CD8-positive, alpha-beta T cell (primary cell): ENCODE measurements at regions of chr15 and their contacts with region 1.

Region 1: GRCh38 chr15:74635228-74635627 is 19.6 kb downstream of the CLK3 start:
- DNase-seq: peak; percentile 53 to 84 (median 73)
- ATAC-seq: peak; percentile 95
- H3K4me3 ChIP-seq: no peak overlapping the region
- H3K4me3 Mint-ChIP-seq: no peak overlapping the region
- H3K27ac ChIP-seq: peak overlapping the region in 1 of 2 experiments; percentile 36
- H3K27ac Mint-ChIP-seq: no peak overlapping the region
- H3K4me1 ChIP-seq: peaks cover 6% of the 10 kb centered on the region
- H3K4me1 Mint-ChIP-seq: peaks cover 5% of the 10 kb centered on the region
- H3K27me3 ChIP-seq: no peaks in the 10 kb centered on the region
- H3K27me3 Mint-ChIP-seq: no peaks in the 10 kb centered on the region
- CTCF ChIP-seq: peak; percentile 82

Region 2: DNA sequence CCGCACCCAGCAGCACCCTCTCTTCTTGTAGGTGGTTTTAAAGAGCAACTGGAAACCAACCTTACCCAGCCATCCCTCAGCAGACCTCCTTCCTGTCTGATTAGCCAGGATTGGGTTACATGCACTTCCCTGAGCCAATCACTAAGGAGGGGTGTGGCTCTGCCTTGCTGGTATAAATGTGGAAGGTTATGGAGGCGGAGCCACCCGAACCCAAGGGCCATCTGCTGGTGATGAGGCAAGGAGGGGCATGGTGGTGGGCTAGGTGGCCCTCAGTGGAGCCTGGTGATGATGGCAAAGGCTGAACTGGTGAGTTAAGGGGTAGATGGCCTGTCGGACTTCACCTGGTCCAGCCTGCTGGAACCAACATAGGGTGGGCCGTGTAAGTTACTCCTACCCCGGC is 359.3 kb before region 1 on chr15:
- CTCF ChIA-PET with region 1: no interaction called
- POLR2A ChIA-PET with region 1: no interaction called
- intact Hi-C with region 1: no loop called
- DNase-seq: no peak
- ATAC-seq: no peak
- H3K4me3 ChIP-seq: no peak overlapping the region
- H3K4me3 Mint-ChIP-seq: no peak overlapping the region
- H3K27ac ChIP-seq: no peak overlapping the region
- H3K27ac Mint-ChIP-seq: no peak overlapping the region
- H3K4me1 ChIP-seq: no peaks in the 10 kb centered on the region
- H3K4me1 Mint-ChIP-seq: no peaks in the 10 kb centered on the region
- H3K27me3 ChIP-seq: no peaks in the 10 kb centered on the region
- H3K27me3 Mint-ChIP-seq: peaks cover 22% of the 10 kb centered on the region
- CTCF ChIP-seq: no peak

Region 3: DNA sequence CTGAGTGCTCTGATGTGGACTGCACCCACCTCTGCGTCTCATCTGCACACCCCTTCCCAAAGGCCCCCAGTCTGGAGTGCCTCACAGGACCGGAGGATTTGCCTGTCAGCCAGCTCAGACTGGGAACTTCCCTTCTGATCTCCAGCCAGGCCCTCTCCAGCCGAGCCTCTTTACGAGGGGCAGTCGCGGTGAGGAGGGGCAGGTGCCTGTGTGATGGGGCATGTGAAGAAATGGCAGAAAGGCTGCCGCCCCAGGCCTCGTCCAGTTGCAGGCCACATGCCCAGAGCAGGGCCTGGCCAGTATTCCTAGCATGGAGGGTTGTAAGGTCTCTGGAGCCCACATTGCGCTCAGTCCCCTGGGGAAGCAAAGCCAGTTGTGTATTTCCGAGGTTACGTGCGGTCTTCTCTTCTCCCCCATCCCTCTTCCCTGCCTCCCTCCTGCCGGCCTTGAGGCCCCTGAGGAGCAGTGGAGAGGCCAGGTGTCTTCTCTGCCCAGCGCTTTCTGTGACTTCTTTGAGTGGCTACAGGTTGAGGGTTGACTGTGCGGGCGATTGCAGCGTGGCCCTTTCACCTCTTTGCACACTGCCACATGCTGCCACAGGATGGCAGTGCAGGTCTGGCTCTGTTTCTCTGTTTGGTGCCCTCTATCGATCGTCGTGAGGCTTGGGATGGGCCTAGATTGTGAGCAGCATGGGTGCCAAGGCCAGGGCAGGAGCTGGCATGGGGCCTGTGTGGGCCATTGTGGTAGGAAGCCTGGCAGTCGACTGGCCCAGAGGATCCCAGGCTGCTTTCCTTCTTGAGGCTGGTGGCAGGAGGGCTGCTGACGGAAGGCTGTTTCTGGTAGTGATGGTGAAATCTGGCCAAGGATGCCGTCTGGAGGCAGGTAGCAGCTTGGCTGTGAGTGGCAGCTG is 14.3 kb before region 1 on chr15:
- CTCF ChIA-PET with region 1: interaction called, 295 read pairs
- POLR2A ChIA-PET with region 1: interaction called, 12 read pairs
- intact Hi-C with region 1: loop called (anchors 1 kb)
- DNase-seq: peak; percentile 44 to 87 (median 73)
- ATAC-seq: peak; percentile 92
- H3K4me3 ChIP-seq: no peak overlapping the region
- H3K4me3 Mint-ChIP-seq: no peak overlapping the region
- H3K27ac ChIP-seq: peak overlapping the region in 1 of 2 experiments; percentile 16
- H3K27ac Mint-ChIP-seq: peak overlapping the region; percentile 2
- H3K4me1 ChIP-seq: peaks cover 43% of the 10 kb centered on the region
- H3K4me1 Mint-ChIP-seq: peaks cover 63% of the 10 kb centered on the region
- H3K27me3 ChIP-seq: no peaks in the 10 kb centered on the region
- H3K27me3 Mint-ChIP-seq: no peaks in the 10 kb centered on the region
- CTCF ChIP-seq: peak; percentile 94

Region 4: GRCh38 chr15:74723754-74724334 is 88.6 kb after region 1 on chr15:
- CTCF ChIA-PET with region 1: interaction called, 11 read pairs
- POLR2A ChIA-PET with region 1: no interaction called
- intact Hi-C with region 1: no loop called
- DNase-seq: peak in 2 of 9 experiments; percentile 34 to 51
- ATAC-seq: peak; percentile 45
- H3K4me3 ChIP-seq: no peak overlapping the region
- H3K4me3 Mint-ChIP-seq: no peak overlapping the region
- H3K27ac ChIP-seq: no peak overlapping the region
- H3K27ac Mint-ChIP-seq: no peak overlapping the region
- H3K4me1 ChIP-seq: peaks cover 7% of the 10 kb centered on the region
- H3K4me1 Mint-ChIP-seq: peaks cover 9% of the 10 kb centered on the region
- H3K27me3 ChIP-seq: peaks cover 0 to 3% of the 10 kb centered on the region in 2 experiments
- H3K27me3 Mint-ChIP-seq: peaks cover 12% of the 10 kb centered on the region
- CTCF ChIP-seq: no peak

Region 5: DNA sequence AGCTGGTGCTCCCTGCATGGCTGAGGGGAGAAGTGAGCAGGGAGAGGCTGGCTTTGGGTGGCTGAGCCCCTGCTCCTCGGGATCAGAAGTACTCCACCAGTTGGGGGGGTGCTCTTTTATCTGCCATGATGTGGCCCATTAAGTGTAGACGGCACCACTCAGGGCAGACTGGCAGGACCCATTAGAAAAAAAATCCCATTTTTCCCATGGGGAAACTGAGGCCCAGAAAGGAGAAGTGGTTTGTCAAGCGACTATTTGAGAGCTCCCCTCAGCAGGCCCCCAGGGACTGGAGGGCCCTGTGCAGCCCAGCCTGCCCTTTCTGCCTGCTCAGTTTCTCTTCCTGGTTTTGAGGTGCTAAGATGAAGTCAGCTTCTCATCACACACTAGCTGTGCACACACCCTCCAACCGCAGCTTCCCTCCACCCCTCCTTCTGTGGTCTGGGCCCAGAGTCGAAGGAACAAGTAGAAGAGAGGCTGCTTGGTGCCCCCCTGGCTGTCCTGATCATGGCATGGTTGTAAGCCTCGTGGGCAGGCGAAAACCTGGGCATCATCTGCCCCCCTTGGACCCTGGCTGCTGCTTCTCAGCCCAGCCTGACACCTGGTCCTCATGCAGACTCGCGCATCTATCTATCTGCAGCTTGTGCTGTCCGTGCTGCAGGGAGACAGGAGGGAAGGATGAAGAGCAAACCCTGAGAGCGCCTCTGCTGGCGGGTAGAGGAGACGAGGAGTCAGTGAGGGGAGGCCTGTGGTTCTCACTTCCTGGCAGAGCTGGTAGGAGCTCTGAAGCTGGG is 152.2 kb after region 1 on chr15:
- CTCF ChIA-PET with region 1: interaction called, 151 read pairs
- POLR2A ChIA-PET with region 1: no interaction called
- intact Hi-C with region 1: no loop called
- DNase-seq: peak; percentile 81 to 97 (median 92)
- ATAC-seq: peak; percentile 71
- H3K4me3 ChIP-seq: peak overlapping the region; percentile 83 to 98
- H3K4me3 Mint-ChIP-seq: peak overlapping the region; percentile 83
- H3K27ac ChIP-seq: peak overlapping the region; percentile 53 to 90
- H3K27ac Mint-ChIP-seq: peak overlapping the region; percentile 92
- H3K4me1 ChIP-seq: peaks cover 76% of the 10 kb centered on the region
- H3K4me1 Mint-ChIP-seq: peaks cover 71% of the 10 kb centered on the region
- H3K27me3 ChIP-seq: no peaks in the 10 kb centered on the region
- H3K27me3 Mint-ChIP-seq: no peaks in the 10 kb centered on the region
- CTCF ChIP-seq: peak; percentile 62

Region 6: DNA sequence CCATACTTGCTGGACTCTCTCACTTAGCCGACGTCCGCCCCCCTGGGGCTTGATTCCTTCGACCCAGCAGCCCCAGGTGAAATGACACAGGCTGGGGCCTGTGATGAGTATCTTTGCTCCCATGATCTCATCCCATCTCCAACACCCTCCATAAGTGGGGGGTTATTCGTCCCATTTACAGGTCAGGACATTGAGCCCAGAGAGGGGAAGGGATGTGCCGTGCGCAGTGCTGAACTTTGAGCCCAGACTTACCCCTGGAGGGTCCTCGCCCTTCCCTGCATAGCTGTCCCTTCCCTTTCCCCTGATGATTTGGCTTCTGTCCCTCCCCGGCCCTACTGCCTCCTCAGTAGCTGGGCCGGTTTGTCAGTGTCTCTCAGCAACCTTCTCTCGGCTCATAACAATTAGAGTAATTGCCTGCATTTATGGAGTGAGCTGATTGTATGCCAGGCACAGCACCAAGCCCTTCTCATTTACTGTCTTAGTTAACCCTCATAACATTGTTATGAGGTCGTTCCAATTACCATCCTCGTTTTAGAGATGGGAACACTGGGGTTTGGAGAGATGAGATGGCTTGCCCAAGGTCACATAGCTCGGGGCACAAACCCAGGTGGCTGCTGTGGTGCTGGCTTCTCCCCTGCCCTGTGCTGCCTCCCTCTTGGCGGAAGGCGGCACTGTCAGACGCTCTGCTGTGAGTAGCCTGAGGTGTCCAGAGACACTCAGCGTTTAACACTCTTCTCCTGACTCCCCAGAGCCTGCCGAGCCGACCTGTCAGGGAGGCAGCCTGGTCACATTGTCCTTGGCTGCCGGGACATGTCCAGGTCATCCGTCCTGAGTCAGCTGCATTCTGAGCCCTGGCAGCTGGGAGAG is 181.8 kb after region 1 on chr15:
- CTCF ChIA-PET with region 1: interaction called, 4 read pairs
- POLR2A ChIA-PET with region 1: no interaction called
- intact Hi-C with region 1: loop called in 1 of 2 experiments (anchors 5 kb)
- DNase-seq: no peak
- ATAC-seq: no peak
- H3K4me3 ChIP-seq: no peak overlapping the region
- H3K4me3 Mint-ChIP-seq: no peak overlapping the region
- H3K27ac ChIP-seq: no peak overlapping the region
- H3K27ac Mint-ChIP-seq: no peak overlapping the region
- H3K4me1 ChIP-seq: peaks cover 7% of the 10 kb centered on the region
- H3K4me1 Mint-ChIP-seq: peaks cover 5% of the 10 kb centered on the region
- H3K27me3 ChIP-seq: no peaks in the 10 kb centered on the region
- H3K27me3 Mint-ChIP-seq: peaks cover 2% of the 10 kb centered on the region
- CTCF ChIP-seq: no peak